ENCODE measurements at regions of chr19 and their contacts with region 1.

Region 1: GRCh38 chr19:11125994-11126685 is 29.4 kb downstream of the SPC24 start:
- DNase-seq: peak; percentile 78 to 85
- ATAC-seq: peak; percentile 59 to 85 (median 68)
- H3K4me3 ChIP-seq: no peak overlapping the region
- H3K27ac ChIP-seq: no peak overlapping the region
- H3K4me1 ChIP-seq: no peaks in the 10 kb centered on the region
- H3K27me3 ChIP-seq: no peaks in the 10 kb centered on the region
- CTCF ChIP-seq: peak; percentile 67

Region 2: GRCh38 chr19:11035441-11036377 is 90.4 kb before region 1 on chr19:
- intact Hi-C with region 1: loop called (anchors 5 kb)
- DNase-seq: peak; percentile 95 to 96
- ATAC-seq: peak; percentile 88 to 91 (median 90)
- H3K4me3 ChIP-seq: no peak overlapping the region
- H3K27ac ChIP-seq: peak overlapping the region; percentile 58
- H3K4me1 ChIP-seq: peaks cover 14% of the 10 kb centered on the region
- H3K27me3 ChIP-seq: no peaks in the 10 kb centered on the region
- CTCF ChIP-seq: peak; percentile 69

Measured in psoas muscle (tissue), 8 donors.